ENCODE measurements at regions of chr2 and their contacts with region 1.

Region 1: GRCh38 chr2:86160156-86160952 is 34.9 kb downstream of the IMMT start:
- DNase-seq: peak; percentile 79
- ATAC-seq: peak; percentile 90
- H3K4me3 ChIP-seq: no peak overlapping the region
- H3K27ac ChIP-seq: no peak overlapping the region
- H3K4me1 ChIP-seq: no peaks in the 10 kb centered on the region; the same call in 1 of the 2 replicates
- H3K27me3 ChIP-seq: no peaks in the 10 kb centered on the region
- CTCF ChIP-seq: no peak
- POLR2A ChIP-seq: no peak
- RAD21 ChIP-seq: no peak

Region 2: GRCh38 chr2:86048888-86049287 is 111.5 kb before region 1 on chr2:
- CTCF ChIA-PET with region 1: interaction called, 11 read pairs
- POLR2A ChIA-PET with region 1: no interaction called
- dilution Hi-C with region 1: no loop called
- in situ Hi-C with region 1: no loop called
- intact Hi-C with region 1: no loop called
- DNase-seq: no peak
- ATAC-seq: no peak
- H3K4me3 ChIP-seq: no peak overlapping the region
- H3K27ac ChIP-seq: no peak overlapping the region
- H3K4me1 ChIP-seq: peaks cover 2% of the 10 kb centered on the region
- H3K27me3 ChIP-seq: no peaks in the 10 kb centered on the region
- CTCF ChIP-seq: no peak
- POLR2A ChIP-seq: no peak
- RAD21 ChIP-seq: no peak

Region 3: GRCh38 chr2:86118133-86118532 is 42.2 kb before region 1 on chr2:
- CTCF ChIA-PET with region 1: no interaction called
- POLR2A ChIA-PET with region 1: no interaction called
- dilution Hi-C with region 1: no loop called
- in situ Hi-C with region 1: no loop called
- intact Hi-C with region 1: loop called (anchors 5 kb)
- DNase-seq: no peak
- ATAC-seq: no peak
- H3K4me3 ChIP-seq: no peak overlapping the region
- H3K27ac ChIP-seq: no peak overlapping the region
- H3K4me1 ChIP-seq: peaks cover 5% of the 10 kb centered on the region
- H3K27me3 ChIP-seq: no peaks in the 10 kb centered on the region
- CTCF ChIP-seq: no peak
- POLR2A ChIP-seq: no peak
- RAD21 ChIP-seq: no peak

Region 4: GRCh38 chr2:86134709-86135108 is 25.6 kb before region 1 on chr2:
- CTCF ChIA-PET with region 1: no interaction called
- POLR2A ChIA-PET with region 1: no interaction called
- dilution Hi-C with region 1: no loop called
- in situ Hi-C with region 1: no loop called
- intact Hi-C with region 1: loop called (anchors 5 kb)
- DNase-seq: no peak
- ATAC-seq: no peak
- H3K4me3 ChIP-seq: no peak overlapping the region
- H3K27ac ChIP-seq: no peak overlapping the region
- H3K4me1 ChIP-seq: no peaks in the 10 kb centered on the region
- H3K27me3 ChIP-seq: no peaks in the 10 kb centered on the region
- CTCF ChIP-seq: no peak
- POLR2A ChIP-seq: no peak
- RAD21 ChIP-seq: no peak

Region 5: DNA sequence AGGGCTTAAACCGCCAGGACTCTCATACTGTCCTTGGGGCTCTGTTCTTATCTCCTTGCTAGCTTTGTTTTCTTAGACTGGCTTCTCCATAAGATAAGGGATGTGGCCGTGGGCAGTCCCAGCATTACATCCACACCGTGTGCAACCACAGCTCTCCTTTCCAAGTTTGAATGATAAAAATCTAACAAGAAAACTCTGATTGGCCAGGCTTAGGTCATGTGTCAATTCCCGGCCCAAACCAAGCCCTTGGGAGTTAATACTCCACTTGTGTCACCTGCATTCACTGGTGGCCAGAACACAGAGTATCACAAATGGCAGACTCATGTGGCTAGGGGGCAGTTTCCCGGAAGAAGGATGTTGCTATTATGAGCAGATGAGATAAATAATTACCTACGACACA is 237.6 kb after region 1 on chr2:
- CTCF ChIA-PET with region 1: no interaction called
- POLR2A ChIA-PET with region 1: no interaction called
- dilution Hi-C with region 1: no loop called
- in situ Hi-C with region 1: no loop called
- intact Hi-C with region 1: no loop called
- DNase-seq: no peak
- ATAC-seq: no peak
- H3K4me3 ChIP-seq: no peak overlapping the region
- H3K27ac ChIP-seq: no peak overlapping the region
- H3K4me1 ChIP-seq: no peaks in the 10 kb centered on the region
- H3K27me3 ChIP-seq: peaks cover 8% of the 10 kb centered on the region
- CTCF ChIP-seq: no peak
- POLR2A ChIP-seq: no peak
- RAD21 ChIP-seq: no peak